CD4-positive, alpha-beta T cell (primary cell): ENCODE measurements at regions of chr1 and their contacts with region 1.

Region 1: GRCh38 chr1:203682473-203683383 is 56.1 kb downstream of the ATP2B4 start:
- DNase-seq: peak in 13 of 14 experiments; percentile 19 to 94 (median 59)
- ATAC-seq: peak; percentile 93
- H3K4me3 ChIP-seq: no peak overlapping the region
- H3K4me3 Mint-ChIP-seq: peak overlapping the region; percentile 20
- H3K27ac ChIP-seq: peak overlapping the region; percentile 64 to 71
- H3K27ac Mint-ChIP-seq: peak overlapping the region; percentile 89
- H3K4me1 ChIP-seq: peaks cover 42% of the 10 kb centered on the region
- H3K4me1 Mint-ChIP-seq: peaks cover 67% of the 10 kb centered on the region
- H3K27me3 ChIP-seq: no peaks in the 10 kb centered on the region
- H3K27me3 Mint-ChIP-seq: no peaks in the 10 kb centered on the region
- CTCF ChIP-seq: no peak

Region 2: DNA sequence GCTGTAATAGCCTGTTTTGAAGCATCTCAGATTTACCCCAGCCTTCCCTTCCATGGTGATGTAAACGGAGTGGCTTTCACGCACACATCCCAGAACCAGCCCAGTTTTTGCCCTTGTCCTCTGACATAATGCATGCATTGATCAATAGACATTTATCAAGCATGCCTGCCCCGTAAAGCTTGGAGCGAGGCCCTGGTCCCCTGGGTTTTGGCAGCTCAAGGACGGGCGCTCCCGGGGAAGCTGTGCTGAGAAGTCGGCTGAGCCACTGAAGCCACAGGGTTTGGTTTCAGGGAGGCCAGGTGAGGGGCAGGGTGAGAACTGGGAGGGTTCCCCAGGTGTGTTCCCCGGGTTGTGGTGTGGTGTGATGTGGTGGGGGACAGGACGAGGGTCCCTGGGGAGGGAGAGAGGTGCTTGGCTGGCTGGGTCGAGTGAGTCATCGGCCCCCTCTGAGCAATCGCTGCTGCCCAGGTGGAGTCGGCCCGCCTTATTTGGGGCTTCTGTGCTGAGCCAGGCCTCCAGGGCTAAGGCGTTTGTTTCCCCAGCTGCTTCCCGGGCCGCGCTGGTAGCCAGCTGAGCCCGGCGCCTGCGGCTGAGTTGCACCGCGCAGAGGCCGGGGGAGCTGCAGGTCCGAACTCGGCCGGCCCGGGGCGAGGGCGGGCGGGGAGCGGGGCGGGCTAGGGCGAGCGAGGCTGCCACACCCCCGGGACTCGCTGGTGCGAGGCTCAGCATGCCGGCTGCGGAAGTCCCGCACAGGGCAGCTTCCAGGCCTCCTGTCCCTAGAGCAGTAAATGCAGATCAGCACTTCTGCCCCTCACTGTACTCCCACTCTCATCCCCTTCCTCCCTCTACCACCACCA is 32.5 kb before region 1 on chr1:
- CTCF ChIA-PET with region 1: interaction called, 5 read pairs
- POLR2A ChIA-PET with region 1: interaction called, 17 read pairs
- intact Hi-C with region 1: loop called in 1 of 2 experiments (anchors 5 kb)
- DNase-seq: peak; percentile 44 to 88 (median 70)
- ATAC-seq: peak; percentile 61
- H3K4me3 ChIP-seq: peak overlapping the region; percentile 48
- H3K4me3 Mint-ChIP-seq: peak overlapping the region; percentile 85
- H3K27ac ChIP-seq: peak overlapping the region; percentile 70 to 82
- H3K27ac Mint-ChIP-seq: peak overlapping the region; percentile 91
- H3K4me1 ChIP-seq: peaks cover 76% of the 10 kb centered on the region
- H3K4me1 Mint-ChIP-seq: peaks cover 63% of the 10 kb centered on the region
- H3K27me3 ChIP-seq: no peaks in the 10 kb centered on the region
- H3K27me3 Mint-ChIP-seq: no peaks in the 10 kb centered on the region
- CTCF ChIP-seq: no peak